Dorsolateral prefrontal cortex (tissue), 120 donors: ENCODE measurements at regions of chr22 and their contacts with region 1.

Region 1: GRCh38 chr22:46250035-46250782 is at the start of gene CDPF1:
- DNase-seq: peak; percentile 81 to 96 (median 90)
- H3K4me3 ChIP-seq: peak within 1 kb of the TSS; percentile 63 to 99 (median 86)
- H3K27ac ChIP-seq: peak within 1 kb of the TSS; percentile 5 to 94 (median 85)
- H3K27me3 ChIP-seq: no peaks in the 10 kb centered on the region
- CTCF ChIP-seq: peak in 33 of 56 donors; percentile 11 to 51 (median 27)
- total RNA-seq, gene CDPF1: 3.3 to 15.3 (median 7.3) TPM

Region 2: GRCh38 chr22:46122511-46122971 is 127.7 kb before region 1 on chr22:
- intact Hi-C with region 1: loop called in 1 of 2 experiments (anchors 5 kb)
- DNase-seq: peak; percentile 61 to 80 (median 70)
- H3K4me3 ChIP-seq: peak overlapping the region in 23 of 59 donors; percentile 6 to 53 (median 28)
- H3K27ac ChIP-seq: no peak overlapping the region
- H3K27me3 ChIP-seq: no peaks in the 10 kb centered on the region
- CTCF ChIP-seq: peak; percentile 87 to 99 (median 97)

Region 3: GRCh38 chr22:46150034-46150654 is 100.1 kb before region 1 on chr22 and contains the start of gene PPARA:
- intact Hi-C with region 1: loop called (anchors 5 kb)
- DNase-seq: peak; percentile 57 to 93 (median 84)
- H3K4me3 ChIP-seq: peak within 1 kb of the TSS; percentile 69 to 98 (median 85)
- H3K27ac ChIP-seq: peak within 1 kb of the TSS; percentile 74 to 99 (median 97)
- H3K27me3 ChIP-seq: peaks cover 0 to 16% (median 0%) of the 10 kb centered on the region in 45 donors
- CTCF ChIP-seq: peak in 1 of 56 donors; percentile 15
- total RNA-seq, gene PPARA: 13.9 to 53.9 (median 22.6) TPM

Region 4: GRCh38 chr22:46335201-46336118 is 85.3 kb after region 1 on chr22 and contains the start of gene TRMU:
- intact Hi-C with region 1: loop called in 1 of 2 experiments (anchors 10 kb)
- DNase-seq: peak; percentile 59 to 93 (median 78)
- H3K4me3 ChIP-seq: peak within 1 kb of the TSS; percentile 65 to 100 (median 96)
- H3K27ac ChIP-seq: peak within 1 kb of the TSS; percentile 64 to 97 (median 90)
- H3K27me3 ChIP-seq: no peaks in the 10 kb centered on the region
- CTCF ChIP-seq: peak in 43 of 56 donors; percentile 9 to 58 (median 25)
- total RNA-seq, gene TRMU: 28.6 to 91.0 (median 58.7) TPM

Region 5: DNA sequence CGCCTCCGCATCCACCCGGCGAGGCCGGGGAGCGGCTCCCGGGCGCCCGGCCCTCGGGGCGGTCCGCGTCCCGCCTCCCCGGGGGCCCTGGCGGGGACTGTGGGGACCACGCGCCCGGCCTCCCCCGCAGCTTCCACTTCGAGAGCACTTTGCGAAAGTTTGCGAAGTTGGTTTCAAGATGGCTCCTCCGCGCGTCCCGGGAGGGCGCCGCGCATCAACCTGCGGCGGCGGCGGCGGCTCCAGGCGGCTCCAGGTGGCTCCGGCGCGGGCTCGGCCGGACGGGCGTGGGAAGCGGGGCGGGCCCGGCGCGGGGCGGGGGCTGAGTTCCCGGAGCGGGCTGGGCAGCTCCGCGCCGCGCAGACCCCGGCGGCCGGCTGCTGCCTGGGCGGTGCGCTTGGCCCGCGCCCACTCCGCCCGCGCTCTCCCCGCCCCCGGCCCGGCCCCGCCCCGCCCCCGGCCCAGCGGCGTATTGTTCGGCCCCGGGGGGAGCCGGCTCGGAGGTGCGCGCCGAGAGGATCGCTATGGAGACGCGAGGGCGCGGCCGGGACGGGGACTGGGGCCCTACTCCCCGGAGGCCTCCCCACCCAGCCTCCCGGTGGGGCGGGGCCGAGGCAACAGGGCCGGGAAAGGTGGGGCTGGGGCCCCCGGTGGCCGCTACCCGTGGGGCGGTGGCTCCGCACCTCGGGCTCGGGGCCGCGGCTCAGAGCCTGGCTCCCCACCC is 287.2 kb after region 1 on chr22 and contains the start of gene CELSR1:
- intact Hi-C with region 1: no loop called
- DNase-seq: no peak
- H3K4me3 ChIP-seq: peak within 1 kb of the TSS in 39 of 59 donors; percentile 1 to 54 (median 26)
- H3K27ac ChIP-seq: no peak within 1 kb of the TSS
- H3K27me3 ChIP-seq: peaks cover 0 to 70% (median 38%) of the 10 kb centered on the region in 45 donors
- CTCF ChIP-seq: no peak
- total RNA-seq, gene CELSR1: 0.03 to 0.93 (median 0.23) TPM in 111 of 120 experiments, not detected in the others

Region 6: GRCh38 chr22:46592390-46592872 is 342.2 kb after region 1 on chr22:
- intact Hi-C with region 1: no loop called
- DNase-seq: peak in 1 of 10 donors; percentile 49
- H3K4me3 ChIP-seq: peak overlapping the region in 56 of 59 donors; percentile 4 to 64 (median 36)
- H3K27ac ChIP-seq: peak overlapping the region in 51 of 59 donors; percentile 13 to 80 (median 58)
- H3K27me3 ChIP-seq: no peaks in the 10 kb centered on the region
- CTCF ChIP-seq: no peak